Mammary epithelial cell (primary cell): ENCODE measurements at regions of chr22 and their contacts with region 1.

Region 1: GRCh38 chr22:48138855-48139254 is 1376.4 kb downstream of the TBC1D22A start:
- DNase-seq: no peak
- H3K4me3 ChIP-seq: no peak overlapping the region
- H3K27ac ChIP-seq: no peak overlapping the region
- H3K4me1 ChIP-seq: no peaks in the 10 kb centered on the region
- H3K27me3 ChIP-seq: no peaks in the 10 kb centered on the region
- CTCF ChIP-seq: no peak

Region 2: GRCh38 chr22:47691152-47691895 is 447.5 kb before region 1 on chr22:
- CTCF ChIA-PET with region 1: no interaction called
- dilution Hi-C with region 1: no loop called
- in situ Hi-C with region 1: no loop called
- intact Hi-C with region 1: no loop called
- DNase-seq: no peak
- H3K4me3 ChIP-seq: no peak overlapping the region
- H3K27ac ChIP-seq: no peak overlapping the region
- H3K4me1 ChIP-seq: no peaks in the 10 kb centered on the region
- H3K27me3 ChIP-seq: no peaks in the 10 kb centered on the region
- CTCF ChIP-seq: no peak

Region 3: GRCh38 chr22:47943729-47944700 is 194.8 kb before region 1 on chr22:
- CTCF ChIA-PET with region 1: no interaction called
- dilution Hi-C with region 1: no loop called
- in situ Hi-C with region 1: no loop called
- intact Hi-C with region 1: no loop called
- DNase-seq: no peak
- H3K4me3 ChIP-seq: no peak overlapping the region
- H3K27ac ChIP-seq: no peak overlapping the region
- H3K4me1 ChIP-seq: no peaks in the 10 kb centered on the region
- H3K27me3 ChIP-seq: no peaks in the 10 kb centered on the region
- CTCF ChIP-seq: no peak

Region 4: DNA sequence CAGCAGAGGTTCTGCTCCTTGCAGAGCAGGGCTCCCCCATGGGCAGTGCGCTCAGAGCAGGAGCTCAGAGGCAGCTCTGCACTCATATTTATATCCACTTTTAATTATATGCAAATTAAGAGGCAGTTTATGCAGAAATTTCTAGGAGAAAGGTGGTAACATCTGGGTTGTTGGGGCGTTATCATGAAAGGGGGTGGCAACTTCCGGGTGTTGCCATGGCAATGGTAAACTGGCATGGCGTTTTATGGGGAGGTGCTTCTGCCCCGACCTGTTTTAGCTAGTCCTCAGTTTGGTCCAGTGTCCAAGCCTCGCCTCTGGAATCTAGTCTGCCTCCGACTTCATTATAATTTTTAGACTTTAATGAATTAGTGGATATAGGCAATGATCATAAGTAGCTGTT is 184.7 kb before region 1 on chr22:
- CTCF ChIA-PET with region 1: no interaction called
- dilution Hi-C with region 1: no loop called
- in situ Hi-C with region 1: no loop called
- intact Hi-C with region 1: no loop called
- DNase-seq: no peak
- H3K4me3 ChIP-seq: no peak overlapping the region
- H3K27ac ChIP-seq: no peak overlapping the region
- H3K4me1 ChIP-seq: no peaks in the 10 kb centered on the region
- H3K27me3 ChIP-seq: no peaks in the 10 kb centered on the region
- CTCF ChIP-seq: no peak

Region 5: DNA sequence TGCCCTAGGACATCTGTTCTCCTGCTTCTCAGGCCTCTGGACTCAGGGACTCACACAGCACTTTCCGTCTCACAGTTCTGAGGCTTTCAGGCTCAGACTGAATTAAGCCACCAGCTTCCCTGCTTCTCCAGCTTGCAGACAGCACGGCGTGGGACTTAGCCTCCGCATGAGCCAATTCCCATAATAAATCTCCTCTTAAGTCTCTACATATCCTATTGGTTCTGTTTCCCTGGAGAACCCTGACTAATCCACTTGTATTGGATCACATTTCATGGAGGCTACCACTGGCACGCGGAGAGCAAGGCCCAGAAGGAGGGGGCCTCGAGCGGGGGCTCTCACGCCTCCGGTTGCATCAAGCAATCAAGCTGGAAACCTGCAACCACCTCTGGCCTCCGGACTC is 62.8 kb before region 1 on chr22:
- CTCF ChIA-PET with region 1: no interaction called
- dilution Hi-C with region 1: no loop called
- in situ Hi-C with region 1: no loop called
- intact Hi-C with region 1: no loop called
- DNase-seq: no peak
- H3K4me3 ChIP-seq: no peak overlapping the region
- H3K27ac ChIP-seq: no peak overlapping the region
- H3K4me1 ChIP-seq: no peaks in the 10 kb centered on the region
- H3K27me3 ChIP-seq: no peaks in the 10 kb centered on the region
- CTCF ChIP-seq: no peak

Region 6: GRCh38 chr22:48089601-48090331 is 49.1 kb before region 1 on chr22:
- CTCF ChIA-PET with region 1: no interaction called
- dilution Hi-C with region 1: loop called (anchors 5 kb)
- in situ Hi-C with region 1: no loop called
- intact Hi-C with region 1: no loop called
- DNase-seq: no peak
- H3K4me3 ChIP-seq: no peak overlapping the region
- H3K27ac ChIP-seq: no peak overlapping the region
- H3K4me1 ChIP-seq: no peaks in the 10 kb centered on the region
- H3K27me3 ChIP-seq: no peaks in the 10 kb centered on the region
- CTCF ChIP-seq: no peak